ENCODE measurements at regions of chr6 and their contacts with region 1.

Region 1: DNA sequence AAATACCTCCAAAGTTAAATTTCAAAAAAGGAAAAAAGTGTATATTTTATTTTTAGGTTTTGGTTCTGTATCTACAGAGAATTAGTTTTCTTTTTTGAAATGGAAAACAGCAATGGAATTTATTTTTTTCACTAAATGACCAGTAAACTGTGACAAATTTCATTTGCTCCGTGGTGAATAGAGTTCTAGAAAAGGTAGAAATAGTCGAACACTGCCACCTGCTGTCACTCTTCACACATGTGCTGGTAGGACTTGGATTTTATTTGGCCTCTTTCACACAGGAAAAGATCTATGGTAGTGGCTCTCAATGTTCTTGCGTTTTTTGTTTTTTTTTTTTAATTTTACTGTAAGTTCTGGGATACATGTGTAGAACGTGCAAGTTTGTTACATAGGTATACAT is 312.5 kb downstream of the EYA4 start:
- DNase-seq: no peak
- ATAC-seq: peak; percentile 84
- H3K4me3 ChIP-seq: no peak overlapping the region
- H3K27ac ChIP-seq: no peak overlapping the region
- H3K4me1 ChIP-seq: no peaks in the 10 kb centered on the region
- H3K27me3 ChIP-seq: no peaks in the 10 kb centered on the region
- CTCF ChIP-seq: peak; percentile 69

Region 2: GRCh38 chr6:132962936-132963868 is 590.5 kb before region 1 on chr6:
- CTCF ChIA-PET with region 1: no interaction called
- POLR2A ChIA-PET with region 1: no interaction called
- in situ Hi-C with region 1: no loop called
- intact Hi-C with region 1: loop called (anchors 1 kb)
- DNase-seq: peak; percentile 24
- ATAC-seq: peak; percentile 92
- H3K4me3 ChIP-seq: no peak overlapping the region
- H3K27ac ChIP-seq: no peak overlapping the region
- H3K4me1 ChIP-seq: no peaks in the 10 kb centered on the region
- H3K27me3 ChIP-seq: no peaks in the 10 kb centered on the region
- CTCF ChIP-seq: peak; percentile 84

Region 3: GRCh38 chr6:133184798-133185372 is 368.8 kb before region 1 on chr6:
- CTCF ChIA-PET with region 1: no interaction called
- POLR2A ChIA-PET with region 1: no interaction called
- in situ Hi-C with region 1: no loop called
- intact Hi-C with region 1: loop called (anchors 2 kb)
- DNase-seq: no peak
- ATAC-seq: no peak
- H3K4me3 ChIP-seq: no peak overlapping the region
- H3K27ac ChIP-seq: no peak overlapping the region
- H3K4me1 ChIP-seq: no peaks in the 10 kb centered on the region
- H3K27me3 ChIP-seq: no peaks in the 10 kb centered on the region
- CTCF ChIP-seq: peak; percentile 68; the same call in 1 of the 2 replicates

Region 4: GRCh38 chr6:133528566-133528965 is 25.1 kb before region 1 on chr6:
- CTCF ChIA-PET with region 1: no interaction called
- POLR2A ChIA-PET with region 1: no interaction called
- in situ Hi-C with region 1: no loop called
- intact Hi-C with region 1: no loop called
- DNase-seq: no peak
- ATAC-seq: no peak
- H3K4me3 ChIP-seq: no peak overlapping the region
- H3K27ac ChIP-seq: no peak overlapping the region
- H3K4me1 ChIP-seq: no peaks in the 10 kb centered on the region
- H3K27me3 ChIP-seq: no peaks in the 10 kb centered on the region
- CTCF ChIP-seq: no peak

Measured in Panc1 (cell line).